ENCODE measurements at regions of chr12 and their contacts with region 1.

Region 1: GRCh38 chr12:57124259-57124877 is 3.9 kb upstream of the LRP1 start:
- DNase-seq: peak; percentile 61 to 80
- ATAC-seq: peak; percentile 14

Region 2: DNA sequence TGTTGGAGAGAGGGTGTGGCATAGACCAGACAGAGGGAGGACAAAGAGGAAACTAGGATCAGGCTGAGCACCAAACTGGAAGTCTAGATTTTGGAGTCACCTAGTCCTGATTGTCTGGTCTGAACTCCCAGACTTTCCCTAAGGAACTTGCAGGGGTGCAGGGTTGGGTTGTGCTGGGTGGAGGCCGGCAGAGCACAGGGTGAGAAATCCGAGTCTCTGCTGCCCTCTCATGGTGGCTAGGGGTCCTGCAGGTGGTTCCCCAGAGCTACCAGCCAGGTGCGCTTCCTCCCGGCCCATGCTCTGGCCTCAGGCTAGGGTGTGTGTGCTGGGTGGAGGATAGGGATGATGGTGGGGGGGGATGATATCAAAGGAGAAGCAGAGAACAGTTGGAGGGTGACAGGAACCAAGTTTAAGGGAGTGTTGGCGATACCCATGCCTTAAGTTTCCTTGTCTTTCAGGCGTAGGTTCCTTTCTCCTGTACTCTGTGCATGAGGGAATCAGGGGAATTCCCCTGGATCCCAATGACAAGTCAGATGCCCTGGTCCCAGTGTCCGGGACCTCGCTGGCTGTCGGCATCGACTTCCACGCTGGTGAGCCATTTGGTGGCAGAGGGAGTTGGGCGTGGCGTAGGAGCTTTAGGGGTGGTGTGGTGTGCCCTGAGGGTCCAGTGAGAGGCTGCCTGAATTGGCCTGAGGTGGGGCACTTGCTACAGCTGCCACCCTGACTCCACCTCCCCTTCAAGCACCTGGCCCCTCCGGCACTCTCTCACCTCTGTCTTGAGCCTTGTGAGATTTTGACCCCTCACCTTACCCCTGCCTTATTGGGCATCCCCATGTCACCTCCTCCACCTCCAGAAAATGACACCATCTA is 58.8 kb after region 1 on chr12:
- intact Hi-C with region 1: loop called in 1 of 2 experiments (anchors 2 kb)
- DNase-seq: peak; percentile 60 to 87
- ATAC-seq: peak; percentile 95

Region 3: DNA sequence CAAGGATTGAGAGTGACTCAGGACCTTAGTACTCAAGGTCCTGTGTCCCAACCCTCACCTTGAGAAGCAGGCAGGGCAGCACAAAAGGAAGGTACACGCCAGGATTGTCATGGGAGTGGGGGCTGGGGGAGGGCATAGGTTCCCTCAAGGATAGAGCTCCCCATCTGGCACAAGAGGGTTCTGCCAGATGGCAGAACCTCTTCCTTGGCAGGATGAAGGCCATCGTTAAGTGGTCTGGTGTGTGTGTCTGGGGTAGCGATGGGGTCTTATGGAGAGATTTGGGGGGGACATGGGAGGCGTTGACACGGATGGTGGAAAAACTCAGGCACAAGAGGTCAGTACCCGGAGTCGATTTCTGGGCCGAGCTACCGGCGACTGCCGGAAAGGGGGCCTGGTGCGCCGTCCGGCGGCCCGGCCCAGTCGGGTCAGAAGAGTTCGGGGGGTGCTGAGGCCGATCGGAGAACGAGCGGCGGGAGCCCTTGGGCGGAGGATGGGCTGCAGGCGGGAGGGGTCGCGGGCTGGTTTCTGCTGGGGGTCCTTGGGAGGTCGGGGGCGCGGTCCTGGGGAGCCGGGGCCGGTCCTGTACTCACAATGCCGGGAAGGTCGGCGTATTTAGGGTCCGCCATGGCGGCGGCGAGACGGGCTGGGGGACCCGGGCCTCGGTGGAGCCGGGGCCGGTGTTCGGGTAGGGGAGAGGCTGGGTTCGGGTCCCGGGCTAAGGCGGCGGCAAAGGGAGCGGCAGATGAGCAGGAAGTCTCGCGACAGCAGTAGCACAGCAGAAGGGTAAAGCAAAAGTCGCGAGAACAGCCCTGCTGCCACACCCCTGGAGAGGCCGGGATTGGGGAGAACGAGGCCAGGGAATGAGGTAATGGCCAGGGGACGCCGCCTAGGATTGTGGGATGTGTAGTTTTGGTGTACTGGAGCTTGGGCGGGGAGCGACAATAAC is 422.3 kb after region 1 on chr12 and contains the start of gene DCTN2:
- intact Hi-C with region 1: no loop called
- DNase-seq: peak; percentile 94 to 98
- ATAC-seq: peak; percentile 92
- total RNA-seq, gene DCTN2: 139 to 151 TPM

Measured in left colon (tissue), 2 donors.